Activated B cell treated with CpG ODN at 0.5 μM for 24 hours (primary cell): ENCODE measurements at regions of chr12 and their contacts with region 1.

Region 1: GRCh38 chr12:12696562-12697383 is 790 bp upstream of the GPR19 start:
- DNase-seq: peak; percentile 78
- ATAC-seq: peak; percentile 80
- H3K4me3 Mint-ChIP-seq: peak overlapping the region; percentile 96
- H3K27ac Mint-ChIP-seq: peak overlapping the region; percentile 99
- H3K4me1 Mint-ChIP-seq: peaks cover 33% of the 10 kb centered on the region
- H3K27me3 Mint-ChIP-seq: no peaks in the 10 kb centered on the region
- CTCF ChIP-seq: no peak

Region 2: GRCh38 chr12:11719678-11720099 is 977.1 kb before region 1 on chr12:
- CTCF ChIA-PET with region 1: no interaction called
- POLR2A ChIA-PET with region 1: interaction called, 10 read pairs
- intact Hi-C with region 1: no loop called
- DNase-seq: no peak
- ATAC-seq: no peak
- H3K4me3 Mint-ChIP-seq: no peak overlapping the region
- H3K27ac Mint-ChIP-seq: peak overlapping the region; percentile 18
- H3K4me1 Mint-ChIP-seq: peaks cover 63% of the 10 kb centered on the region
- H3K27me3 Mint-ChIP-seq: no peaks in the 10 kb centered on the region
- CTCF ChIP-seq: no peak

Region 3: GRCh38 chr12:12724661-12725545 is 28.1 kb after region 1 on chr12:
- CTCF ChIA-PET with region 1: interaction called, 3 read pairs
- POLR2A ChIA-PET with region 1: interaction called, 280 read pairs
- intact Hi-C with region 1: loop called (anchors 1 kb)
- DNase-seq: peak; percentile 81
- ATAC-seq: peak; percentile 69
- H3K4me3 Mint-ChIP-seq: peak overlapping the region; percentile 97
- H3K27ac Mint-ChIP-seq: peak overlapping the region; percentile 97
- H3K4me1 Mint-ChIP-seq: peaks cover 50% of the 10 kb centered on the region
- H3K27me3 Mint-ChIP-seq: no peaks in the 10 kb centered on the region
- CTCF ChIP-seq: no peak

Region 4: DNA sequence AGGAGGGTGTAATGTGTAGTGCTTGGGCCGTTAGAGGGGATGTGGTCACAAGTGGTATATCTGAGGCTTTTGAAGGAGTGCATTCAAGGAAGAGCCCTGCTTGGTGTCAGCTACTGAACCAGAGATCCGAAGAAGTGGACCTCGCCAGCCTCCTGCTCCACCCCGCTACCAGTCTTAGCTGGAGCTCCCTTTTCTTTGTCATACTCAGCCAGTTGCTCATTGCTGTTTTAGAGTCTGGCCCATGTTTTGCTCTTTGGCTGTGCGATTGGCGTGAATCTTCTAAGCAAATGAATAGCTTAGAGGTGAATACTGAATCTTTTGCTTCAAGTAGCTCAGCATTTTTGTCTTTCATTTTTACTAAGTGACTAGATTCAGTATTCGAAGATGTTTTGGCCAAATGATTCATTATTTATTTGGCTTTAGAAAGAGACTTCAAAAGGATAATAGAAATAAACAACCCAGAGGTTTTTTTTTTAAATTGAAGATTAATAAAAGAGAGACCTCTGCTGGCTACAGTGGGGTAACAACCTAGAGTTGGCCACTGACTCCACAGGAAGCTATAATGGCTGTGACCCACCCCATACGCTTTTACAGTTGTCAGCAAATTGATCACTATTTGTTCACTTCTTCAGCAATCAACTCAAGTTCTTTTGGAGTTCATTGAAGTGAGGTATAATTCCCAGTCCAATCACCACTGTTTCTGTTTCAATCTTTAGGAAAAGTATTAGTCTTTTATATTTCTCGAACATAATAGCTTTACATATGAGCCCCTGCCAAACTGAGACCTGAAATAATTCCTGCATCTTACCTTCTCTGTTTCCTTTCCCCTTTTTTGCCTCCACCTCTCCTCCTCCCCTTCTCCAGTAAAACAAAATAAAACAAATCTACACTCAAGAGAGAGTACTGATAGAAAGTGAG is 40.2 kb after region 1 on chr12:
- CTCF ChIA-PET with region 1: interaction called, 8 read pairs
- POLR2A ChIA-PET with region 1: interaction called, 25 read pairs
- intact Hi-C with region 1: loop called (anchors 1 kb)
- DNase-seq: peak; percentile 19
- ATAC-seq: peak; percentile 91
- H3K4me3 Mint-ChIP-seq: peak overlapping the region; percentile 30
- H3K27ac Mint-ChIP-seq: peak overlapping the region; percentile 72
- H3K4me1 Mint-ChIP-seq: peaks cover 13% of the 10 kb centered on the region
- H3K27me3 Mint-ChIP-seq: no peaks in the 10 kb centered on the region
- CTCF ChIP-seq: peak; percentile 19

Region 5: DNA sequence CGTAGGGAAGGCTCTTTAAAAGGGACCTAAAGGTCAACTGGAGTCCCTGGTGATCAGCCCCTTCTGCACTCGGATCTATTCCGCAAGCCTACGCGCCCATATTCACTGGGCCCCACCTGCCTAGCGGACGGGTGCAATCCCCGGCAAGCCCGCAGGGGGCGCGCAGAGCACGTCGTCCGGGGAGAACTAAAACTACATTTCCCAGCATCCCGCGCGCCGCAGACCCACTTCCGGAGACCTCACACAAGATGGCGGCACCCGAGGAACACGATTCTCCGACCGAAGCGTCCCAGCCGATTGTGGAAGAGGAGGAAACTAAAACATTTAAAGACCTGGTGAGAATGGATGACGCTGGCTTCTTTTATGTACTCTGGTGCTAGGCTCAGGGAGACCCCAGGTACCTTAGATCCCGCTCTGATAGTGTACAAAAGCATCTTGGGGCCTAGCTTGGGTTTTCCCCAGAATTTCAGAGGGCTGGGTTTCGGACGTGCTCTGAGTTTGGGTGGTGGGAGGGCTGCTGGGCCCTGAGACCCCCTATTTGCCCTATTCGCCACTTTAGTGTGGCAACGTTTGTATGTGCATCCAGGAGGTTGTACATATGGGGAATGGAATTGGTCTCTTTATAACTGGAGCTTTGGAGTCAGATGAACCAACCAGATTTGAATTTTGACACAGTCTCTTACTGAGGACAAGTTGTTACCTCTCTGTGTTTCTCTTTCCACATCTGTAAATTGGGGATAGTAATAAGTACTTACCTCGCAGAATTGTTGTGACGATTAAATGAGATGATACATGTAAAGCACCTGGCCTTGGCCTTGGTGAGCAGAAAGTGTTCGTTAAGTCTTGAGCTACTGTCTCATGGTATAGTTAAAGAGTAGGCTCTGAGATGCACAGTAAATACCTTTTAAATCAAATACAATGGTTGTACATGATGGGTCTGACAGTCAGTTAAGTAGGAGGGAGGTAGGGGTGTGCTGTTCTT is 116.6 kb after region 1 on chr12 and contains the start of gene DDX47:
- CTCF ChIA-PET with region 1: no interaction called
- POLR2A ChIA-PET with region 1: interaction called, 7 read pairs
- intact Hi-C with region 1: loop called (anchors 1 kb)
- DNase-seq: peak; percentile 98
- ATAC-seq: peak; percentile 81
- H3K4me3 Mint-ChIP-seq: peak within 1 kb of the TSS; percentile 96
- H3K27ac Mint-ChIP-seq: peak within 1 kb of the TSS; percentile 93
- H3K4me1 Mint-ChIP-seq: peaks cover 69% of the 10 kb centered on the region
- H3K27me3 Mint-ChIP-seq: no peaks in the 10 kb centered on the region
- CTCF ChIP-seq: peak; percentile 87
- total RNA-seq, gene DDX47: 97.1 and 98.5 TPM in 2 replicates